ENCODE measurements at regions of chr17 and their contacts with region 1.

Region 1: DNA sequence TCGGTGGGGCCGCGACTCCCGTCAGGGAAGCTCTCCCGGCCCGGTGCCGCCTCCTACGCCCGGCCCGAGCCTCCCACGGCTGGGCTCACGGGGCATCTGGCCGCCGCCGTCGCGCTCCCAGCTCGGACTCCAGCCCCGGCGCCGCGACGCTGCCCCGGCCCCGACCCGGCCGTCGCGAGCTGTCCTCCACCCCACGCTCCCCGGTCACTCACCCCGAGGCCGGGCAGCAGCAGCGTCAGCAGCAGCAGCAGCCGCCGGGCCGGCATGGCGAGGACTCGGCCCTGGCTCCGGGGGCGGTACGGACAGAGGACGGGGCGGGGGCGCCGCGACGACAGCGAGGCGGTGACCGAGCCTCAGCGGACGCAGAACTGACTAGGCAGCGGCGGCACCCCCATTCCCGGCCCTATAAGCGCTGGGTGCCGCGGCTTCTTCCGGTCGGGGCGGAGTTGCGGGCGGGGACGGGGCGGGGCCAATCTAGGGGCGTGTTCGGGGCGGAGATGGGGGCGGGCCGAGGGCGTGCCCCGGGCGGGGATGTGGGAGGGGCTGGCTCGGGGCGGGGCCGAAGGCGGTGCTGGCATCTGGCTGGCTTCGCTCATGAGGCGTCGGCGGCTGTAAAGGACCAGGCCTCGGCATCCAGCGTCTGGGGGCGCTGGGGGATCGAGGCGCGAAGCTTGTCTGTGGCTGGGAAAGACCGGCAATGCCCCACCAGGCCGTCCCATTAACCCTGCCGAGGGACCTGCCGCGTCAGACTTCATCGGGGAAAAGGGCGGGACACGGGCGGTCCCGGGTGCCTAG is at the start of gene ERN1:
- DNase-seq: peak; percentile 94 to 95
- ATAC-seq: peak; percentile 92 to 96
- H3K4me3 ChIP-seq: peak within 1 kb of the TSS; percentile 80
- H3K27ac ChIP-seq: peak within 1 kb of the TSS; percentile 85 to 95
- H3K4me1 ChIP-seq: peaks cover 35% of the 10 kb centered on the region
- CTCF ChIP-seq: no peak
- EP300 ChIP-seq: no peak
- POLR2A ChIP-seq: peak; percentile 98
- RAD21 ChIP-seq: 0 out of 5 replicates have a peak, but pooled peaks of 1 of the 2 experiments have one; percentile 47
- polyA plus RNA-seq, gene ERN1: 19.8 and 23.3 TPM in 2 replicates

Region 2: GRCh38 chr17:63931099-63931561 is 198.8 kb before region 1 on chr17:
- CTCF ChIA-PET with region 1: interaction called, 187 read pairs
- POLR2A ChIA-PET with region 1: no interaction called
- DNase-seq: no peak
- ATAC-seq: peak in 1 of 2 experiments; percentile 41; a peak in 3 of 6 replicates
- H3K4me3 ChIP-seq: no peak overlapping the region
- H3K27ac ChIP-seq: no peak overlapping the region
- H3K4me1 ChIP-seq: no peaks in the 10 kb centered on the region
- CTCF ChIP-seq: no peak
- EP300 ChIP-seq: no peak
- POLR2A ChIP-seq: no peak
- RAD21 ChIP-seq: no peak

Region 3: GRCh38 chr17:63974594-63975192 is 155.3 kb before region 1 on chr17:
- CTCF ChIA-PET with region 1: interaction called, 10 read pairs
- POLR2A ChIA-PET with region 1: no interaction called
- DNase-seq: peak in 1 of 2 experiments; percentile 63
- ATAC-seq: peak; percentile 61 to 74
- H3K4me3 ChIP-seq: no peak overlapping the region
- H3K27ac ChIP-seq: peak overlapping the region; percentile 49 to 68; a peak in 5 of 6 replicates
- H3K4me1 ChIP-seq: peaks cover 19% of the 10 kb centered on the region
- CTCF ChIP-seq: no peak
- EP300 ChIP-seq: no peak
- POLR2A ChIP-seq: no peak
- RAD21 ChIP-seq: no peak

Region 4: GRCh38 chr17:64020056-64020766 is 109.8 kb before region 1 on chr17 and contains the start of gene ICAM2:
- CTCF ChIA-PET with region 1: interaction called, 863 read pairs
- POLR2A ChIA-PET with region 1: interaction called, 7 read pairs
- DNase-seq: no peak
- ATAC-seq: peak in 1 of 2 experiments; percentile 33; a peak in 2 of 6 replicates
- H3K4me3 ChIP-seq: no peak within 1 kb of the TSS
- H3K27ac ChIP-seq: no peak within 1 kb of the TSS
- H3K4me1 ChIP-seq: no peaks in the 10 kb centered on the region
- CTCF ChIP-seq: no peak
- EP300 ChIP-seq: no peak
- POLR2A ChIP-seq: no peak
- RAD21 ChIP-seq: no peak
- polyA plus RNA-seq, gene ICAM2: not detected in 2 replicates

Region 5: GRCh38 chr17:64063766-64064224 is 66.2 kb before region 1 on chr17:
- CTCF ChIA-PET with region 1: interaction called, 75 read pairs
- POLR2A ChIA-PET with region 1: interaction called, 8 read pairs
- DNase-seq: peak; percentile 53 to 68
- ATAC-seq: peak; percentile 75 to 97
- H3K4me3 ChIP-seq: no peak overlapping the region
- H3K27ac ChIP-seq: peak overlapping the region in 1 of 2 experiments; percentile 31; a peak in 1 of 6 replicates
- H3K4me1 ChIP-seq: peaks cover 14% of the 10 kb centered on the region
- CTCF ChIP-seq: peak; percentile 54
- EP300 ChIP-seq: no peak
- POLR2A ChIP-seq: no peak
- RAD21 ChIP-seq: peak; percentile 73 to 79

Region 6: GRCh38 chr17:64095144-64095882 is 34.6 kb before region 1 on chr17:
- CTCF ChIA-PET with region 1: interaction called, 24 read pairs
- POLR2A ChIA-PET with region 1: no interaction called
- DNase-seq: no peak
- ATAC-seq: no peak
- H3K4me3 ChIP-seq: no peak overlapping the region
- H3K27ac ChIP-seq: no peak overlapping the region
- H3K4me1 ChIP-seq: peaks cover 9% of the 10 kb centered on the region; the same call in 2 of the 3 replicates
- CTCF ChIP-seq: no peak
- EP300 ChIP-seq: no peak
- POLR2A ChIP-seq: no peak
- RAD21 ChIP-seq: no peak

Region 7: GRCh38 chr17:64281962-64282727 is 152.2 kb after region 1 on chr17:
- CTCF ChIA-PET with region 1: interaction called, 13 read pairs
- POLR2A ChIA-PET with region 1: interaction called, 4 read pairs
- DNase-seq: peak; percentile 68 to 88
- ATAC-seq: peak; percentile 64 to 87; a peak in 5 of 6 replicates
- H3K4me3 ChIP-seq: no peak overlapping the region
- H3K27ac ChIP-seq: peak overlapping the region in 1 of 2 experiments; percentile 27; a peak in 1 of 6 replicates
- H3K4me1 ChIP-seq: no peaks in the 10 kb centered on the region
- CTCF ChIP-seq: peak; percentile 92
- EP300 ChIP-seq: no peak
- POLR2A ChIP-seq: no peak
- RAD21 ChIP-seq: peak; percentile 87 to 94

Region 8: DNA sequence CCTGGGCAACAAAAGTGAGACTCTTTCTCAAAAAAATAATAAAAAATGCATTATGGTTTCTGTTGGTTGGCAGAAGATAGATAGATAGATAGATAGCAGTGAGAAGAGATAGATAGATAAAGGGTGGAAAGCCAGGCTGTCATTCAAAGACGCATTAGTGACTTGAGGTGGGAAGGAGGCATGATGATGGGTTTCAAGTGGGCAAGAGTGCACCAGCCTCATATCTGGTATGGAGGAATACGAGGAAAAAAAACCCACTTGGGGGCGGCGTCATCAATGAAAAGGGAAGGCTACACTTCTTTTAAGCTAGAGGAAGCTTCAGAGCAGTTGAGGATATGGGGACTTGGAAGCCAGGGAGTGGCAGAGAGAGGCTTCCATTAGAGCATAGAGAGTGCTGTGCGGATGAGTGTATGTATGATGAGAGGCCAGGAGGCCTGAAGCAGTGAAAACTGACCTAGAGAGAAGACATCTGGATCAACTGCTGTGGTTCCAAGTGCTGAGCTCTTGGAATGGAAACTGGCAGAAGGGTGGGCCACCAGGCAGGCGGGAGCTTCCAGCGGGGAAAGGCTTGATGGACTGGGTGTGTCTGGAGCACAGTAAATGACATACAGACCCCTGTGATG is 408.7 kb after region 1 on chr17:
- CTCF ChIA-PET with region 1: no interaction called
- POLR2A ChIA-PET with region 1: no interaction called
- DNase-seq: no peak
- ATAC-seq: peak in 1 of 2 experiments; percentile 9; a peak in 2 of 6 replicates
- H3K4me3 ChIP-seq: no peak overlapping the region
- H3K27ac ChIP-seq: no peak overlapping the region
- H3K4me1 ChIP-seq: no peaks in the 10 kb centered on the region
- CTCF ChIP-seq: no peak
- EP300 ChIP-seq: no peak
- POLR2A ChIP-seq: no peak
- RAD21 ChIP-seq: no peak

Measured in A549 (cell line).